CD14-positive monocyte (primary cell): ENCODE measurements at regions of chr1 and their contacts with region 1.

Region 1: GRCh38 chr1:154404984-154405761 is at the start of gene IL6R:
- DNase-seq: peak; percentile 98 to 99 (median 99)
- H3K4me3 ChIP-seq: peak within 1 kb of the TSS; percentile 90 to 95 (median 94)
- H3K4me3 Mint-ChIP-seq: peak within 1 kb of the TSS; percentile 98
- H3K27ac ChIP-seq: peak within 1 kb of the TSS; percentile 97 to 100
- H3K27ac Mint-ChIP-seq: peak within 1 kb of the TSS; percentile 99 to 100 (median 99)
- H3K4me1 ChIP-seq: peaks cover 82 to 89% of the 10 kb centered on the region in 2 donors
- H3K4me1 Mint-ChIP-seq: peaks cover 80% of the 10 kb centered on the region
- H3K27me3 ChIP-seq: no peaks in the 10 kb centered on the region
- H3K27me3 Mint-ChIP-seq: peaks cover 0 to 2% (median 0%) of the 10 kb centered on the region in 3 donors
- CTCF ChIP-seq: no peak
- polyA plus RNA-seq, gene IL6R: 56.4 to 81.7 (median 62.1) TPM

Region 2: GRCh38 chr1:154324669-154325582 is 80.2 kb before region 1 on chr1 and contains the start of gene ATP8B2:
- intact Hi-C with region 1: loop called in 1 of 2 experiments (anchors 5 kb)
- DNase-seq: peak; percentile 47 to 66 (median 59)
- H3K4me3 ChIP-seq: peak within 1 kb of the TSS; percentile 48 to 74 (median 50)
- H3K4me3 Mint-ChIP-seq: peak within 1 kb of the TSS; percentile 88 to 93
- H3K27ac ChIP-seq: no peak within 1 kb of the TSS
- H3K27ac Mint-ChIP-seq: peak within 1 kb of the TSS in 6 of 7 donors; percentile 36 to 89 (median 74)
- H3K4me1 ChIP-seq: peaks cover 35 to 49% of the 10 kb centered on the region in 2 donors
- H3K4me1 Mint-ChIP-seq: peaks cover 46% of the 10 kb centered on the region
- H3K27me3 ChIP-seq: peaks cover 2 to 38% of the 10 kb centered on the region in 2 donors
- H3K27me3 Mint-ChIP-seq: peaks cover 49 to 79% (median 56%) of the 10 kb centered on the region in 3 donors
- CTCF ChIP-seq: peak; percentile 96
- polyA plus RNA-seq, gene ATP8B2: 0.46 to 2.2 (median 0.98) TPM

Region 3: DNA sequence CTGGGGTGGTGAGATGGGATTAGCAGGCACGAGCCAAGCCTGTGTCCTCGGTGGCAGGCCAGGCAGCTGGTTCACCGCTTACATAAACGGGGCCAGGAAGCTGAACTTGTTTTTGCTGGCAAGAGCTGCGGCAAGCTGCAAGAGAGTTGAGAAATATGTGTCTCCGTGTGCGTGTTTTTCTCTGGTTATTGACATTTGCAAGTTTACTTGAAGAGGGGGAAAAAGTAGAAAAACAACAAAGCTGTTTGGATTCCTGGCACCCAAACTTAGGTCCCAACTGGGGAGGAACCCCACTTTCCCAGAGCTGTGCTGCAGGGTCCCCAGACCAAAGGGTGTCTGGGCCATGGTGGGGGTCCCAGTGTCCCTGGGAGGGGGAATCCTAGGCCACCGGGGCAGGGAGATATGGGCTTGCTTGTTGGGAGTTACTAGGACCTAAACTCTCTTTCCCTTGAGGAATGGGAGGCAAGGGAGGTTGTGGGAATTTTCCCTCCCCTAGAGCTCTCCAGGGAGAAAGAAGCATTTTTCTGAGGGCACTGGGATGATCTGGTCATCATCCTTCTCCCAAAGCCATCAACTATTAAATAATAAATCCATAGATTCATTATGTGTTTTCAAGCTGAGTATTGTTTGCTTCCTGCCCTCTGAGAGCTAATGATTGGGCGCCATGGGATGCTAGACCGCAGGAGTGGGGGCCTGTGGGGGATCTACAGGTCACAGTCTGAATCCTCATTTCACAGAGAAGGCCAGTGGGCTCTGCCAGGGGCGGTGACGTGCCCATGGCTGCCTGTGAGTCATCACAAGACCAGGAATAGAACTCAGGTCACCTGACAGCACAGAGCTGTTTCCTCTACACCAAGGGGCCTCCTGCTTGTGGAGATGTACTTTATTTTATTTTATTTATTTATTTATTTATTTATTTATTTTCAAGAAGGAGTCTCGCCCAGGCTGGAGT is 14.7 kb after region 1 on chr1:
- intact Hi-C with region 1: loop called in 1 of 2 experiments (anchors 2 kb)
- DNase-seq: peak; percentile 94 to 97 (median 96)
- H3K4me3 ChIP-seq: peak overlapping the region in 1 of 3 experiments; percentile 52
- H3K4me3 Mint-ChIP-seq: peak overlapping the region; percentile 57 to 68
- H3K27ac ChIP-seq: peak overlapping the region; percentile 97 to 98
- H3K27ac Mint-ChIP-seq: peak overlapping the region; percentile 94 to 96 (median 95)
- H3K4me1 ChIP-seq: peaks cover 79 to 82% of the 10 kb centered on the region in 2 donors
- H3K4me1 Mint-ChIP-seq: peaks cover 85% of the 10 kb centered on the region
- H3K27me3 ChIP-seq: no peaks in the 10 kb centered on the region
- H3K27me3 Mint-ChIP-seq: no peaks in the 10 kb centered on the region
- CTCF ChIP-seq: no peak

Region 4: DNA sequence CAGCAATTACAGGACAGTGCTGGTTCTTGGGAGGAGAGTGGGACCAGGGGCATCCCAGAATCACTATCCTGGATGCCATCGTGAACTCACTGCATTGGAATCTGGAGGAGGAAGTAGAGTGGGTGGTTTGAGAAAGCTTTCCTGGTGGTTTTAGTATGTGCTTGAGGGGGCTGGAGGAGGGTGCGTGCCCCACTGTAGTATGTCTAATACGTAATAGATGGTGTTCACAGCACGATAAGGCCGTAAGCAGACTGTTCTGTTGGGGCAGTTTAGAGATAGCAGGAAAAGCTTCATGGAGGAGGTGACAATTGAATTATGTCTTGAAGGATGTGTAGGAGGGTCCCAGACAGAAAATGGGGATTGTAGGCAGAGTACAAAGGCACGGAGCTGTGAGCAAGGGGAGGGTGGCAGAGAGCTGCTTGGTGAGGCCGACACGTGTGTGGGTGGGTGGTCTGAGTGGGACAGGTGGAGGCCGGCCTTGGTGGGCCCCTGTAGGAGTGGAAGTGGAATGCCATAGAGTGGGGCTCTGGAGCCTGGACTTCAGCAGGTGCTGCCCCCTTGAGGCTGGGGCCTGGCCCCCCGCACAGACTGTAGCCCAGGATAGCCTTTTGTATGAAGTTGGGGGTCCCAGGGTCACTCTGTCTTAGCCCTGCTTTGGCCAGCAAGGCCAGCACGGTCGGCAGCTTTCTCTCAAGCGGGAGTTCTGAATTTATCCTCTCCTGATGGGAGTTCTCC is 37.0 kb after region 1 on chr1:
- intact Hi-C with region 1: loop called in 1 of 2 experiments (anchors 5 kb)
- DNase-seq: no peak
- H3K4me3 ChIP-seq: no peak overlapping the region
- H3K4me3 Mint-ChIP-seq: no peak overlapping the region
- H3K27ac ChIP-seq: peak overlapping the region; percentile 11 to 90
- H3K27ac Mint-ChIP-seq: peak overlapping the region; percentile 3 to 99 (median 68)
- H3K4me1 ChIP-seq: peaks cover 29 to 41% of the 10 kb centered on the region in 2 donors
- H3K4me1 Mint-ChIP-seq: peaks cover 42% of the 10 kb centered on the region
- H3K27me3 ChIP-seq: no peaks in the 10 kb centered on the region
- H3K27me3 Mint-ChIP-seq: peaks cover 0 to 4% (median 0%) of the 10 kb centered on the region in 3 donors
- CTCF ChIP-seq: peak; percentile 21